Activated CD4-positive, alpha-beta T cell treated with anti-CD3 and anti-CD28 coated beads, Interleukin-2, amount 10 ng/mL, durations not matched to agents 24 days and 14 days (primary cell): ENCODE measurements at regions of chr17 and their contacts with region 1.

Region 1: GRCh38 chr17:77054936-77055335 is 85.8 kb upstream of the SEC14L1 start:
- DNase-seq: no peak
- H3K4me3 Mint-ChIP-seq: no peak overlapping the region
- H3K27ac Mint-ChIP-seq: no peak overlapping the region
- H3K4me1 Mint-ChIP-seq: no peaks in the 10 kb centered on the region
- H3K27me3 Mint-ChIP-seq: peaks cover 12% of the 10 kb centered on the region

Region 2: GRCh38 chr17:76868176-76868668 is 186.7 kb before region 1 on chr17 and contains the start of gene MGAT5B:
- intact Hi-C with region 1: loop called (anchors 1 kb)
- DNase-seq: peak; percentile 95
- H3K4me3 Mint-ChIP-seq: peak within 1 kb of the TSS; percentile 74
- H3K27ac Mint-ChIP-seq: no peak within 1 kb of the TSS
- H3K4me1 Mint-ChIP-seq: peaks cover 12% of the 10 kb centered on the region
- H3K27me3 Mint-ChIP-seq: peaks cover 32% of the 10 kb centered on the region
- total RNA-seq, gene MGAT5B: 0.21 and 0.51 TPM in 2 replicates

Region 3: DNA sequence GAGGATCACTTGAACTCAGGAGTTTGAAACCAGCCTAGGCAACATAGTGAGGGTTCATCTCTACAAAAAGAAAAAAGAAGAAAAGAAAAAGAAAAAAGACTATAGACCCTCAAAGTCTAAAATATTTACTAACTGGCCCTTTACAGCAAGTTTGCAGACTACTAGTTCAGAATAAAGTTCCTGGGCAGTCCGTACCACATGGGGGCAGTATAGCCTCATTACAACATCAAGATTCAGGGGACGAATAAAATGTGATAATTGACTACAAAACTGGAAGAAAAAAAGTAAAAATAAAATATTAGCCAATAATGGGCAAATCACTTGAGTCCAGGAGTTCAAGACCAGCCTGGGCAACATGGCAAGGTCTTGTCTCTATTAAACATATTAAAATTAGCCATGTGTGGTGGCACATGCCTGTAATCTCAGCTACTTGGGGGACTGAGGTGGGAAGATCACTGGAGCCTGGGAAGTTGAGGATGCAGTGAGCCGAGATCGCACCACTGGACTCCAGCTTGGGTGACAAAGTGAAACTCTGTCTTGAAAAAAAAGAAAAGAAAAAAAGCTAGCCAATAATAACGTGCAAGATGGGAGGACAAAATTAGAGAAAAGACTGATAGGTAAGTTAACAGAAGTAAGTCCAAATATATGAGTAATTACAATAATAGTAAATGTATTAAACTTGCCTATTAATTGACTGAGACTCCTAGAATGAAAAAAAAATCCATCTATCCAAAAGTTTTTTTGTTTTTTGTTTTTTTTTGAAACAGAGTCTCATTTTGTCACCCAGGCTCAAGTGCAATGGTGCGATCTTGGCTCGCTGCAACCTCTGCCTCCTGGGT is 43.5 kb before region 1 on chr17:
- intact Hi-C with region 1: loop called (anchors 2 kb)
- DNase-seq: peak; percentile 88
- H3K4me3 Mint-ChIP-seq: no peak overlapping the region
- H3K27ac Mint-ChIP-seq: no peak overlapping the region
- H3K4me1 Mint-ChIP-seq: no peaks in the 10 kb centered on the region
- H3K27me3 Mint-ChIP-seq: peaks cover 28% of the 10 kb centered on the region